Activated T-helper 2 cell treated with anti-CD3 and anti-CD28 coated beads, Interferon-gamma antibody, Interleukin-2, Interleukin-4, amounts not matched to agents 10 μg/mL and 5 μg/mL and 100 μg/mL, durations not matched to agents 14 hours and 24 hours and 36 hours (primary cell): ENCODE measurements at regions of chr15 and their contacts with region 1.

Region 1: GRCh38 chr15:99250494-99251435 is 516 bp upstream of the LRRC28 start:
- DNase-seq: peak; percentile 97
- H3K4me3 Mint-ChIP-seq: peak overlapping the region; percentile 85
- H3K27ac Mint-ChIP-seq: peak overlapping the region; percentile 82
- H3K4me1 Mint-ChIP-seq: peaks cover 26% of the 10 kb centered on the region
- H3K27me3 Mint-ChIP-seq: no peaks in the 10 kb centered on the region

Region 2: GRCh38 chr15:99324082-99324620 is 73.4 kb after region 1 on chr15:
- intact Hi-C with region 1: no loop called
- DNase-seq: no peak
- H3K4me3 Mint-ChIP-seq: no peak overlapping the region
- H3K27ac Mint-ChIP-seq: no peak overlapping the region
- H3K4me1 Mint-ChIP-seq: peaks cover 9% of the 10 kb centered on the region
- H3K27me3 Mint-ChIP-seq: no peaks in the 10 kb centered on the region

Region 3: DNA sequence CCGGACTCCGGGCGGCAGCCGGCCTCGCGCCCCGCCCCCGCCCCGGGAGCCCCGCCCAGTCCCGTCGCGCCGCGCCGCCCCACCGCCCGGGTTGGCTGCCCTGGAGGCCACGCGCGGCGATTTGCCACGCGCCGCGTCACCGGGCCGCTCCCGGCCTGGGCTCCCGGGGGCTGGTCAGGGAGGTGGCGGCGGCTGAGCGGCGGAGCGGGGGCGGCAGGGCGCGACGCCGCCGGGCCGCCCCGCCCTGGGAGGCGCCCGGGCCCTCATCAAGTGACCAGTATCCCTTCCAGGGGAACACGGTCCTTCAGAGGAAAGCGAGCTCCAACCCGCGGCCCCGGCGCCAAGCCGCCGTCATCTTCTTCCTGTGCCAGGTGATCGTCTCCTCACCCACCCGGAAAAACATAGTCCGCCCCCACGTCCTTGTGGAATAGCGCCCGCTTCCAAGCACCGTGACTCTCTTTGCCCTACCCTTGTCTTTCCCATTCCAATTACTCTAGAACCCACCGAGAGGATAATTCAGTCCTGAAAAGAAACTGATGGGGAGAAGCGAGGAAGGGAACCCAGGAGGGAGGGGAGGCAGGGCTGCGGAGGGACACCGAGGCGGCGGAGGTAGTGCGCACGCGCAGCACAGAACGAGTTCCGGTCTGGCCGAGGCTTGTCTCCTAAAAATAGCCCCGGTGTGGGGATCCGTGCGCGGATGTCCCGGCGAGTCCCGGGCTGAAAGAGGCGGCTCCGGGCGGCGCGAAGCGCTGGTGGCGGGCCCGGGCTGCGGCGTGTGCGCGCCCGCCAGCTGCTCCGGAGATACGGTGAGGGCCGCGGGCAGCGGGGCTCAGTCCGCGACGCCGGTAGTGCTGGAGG is 314.8 kb after region 1 on chr15 and contains the start of gene MEF2A:
- intact Hi-C with region 1: loop called (anchors 5 kb)
- DNase-seq: peak; percentile 92
- H3K4me3 Mint-ChIP-seq: peak within 1 kb of the TSS; percentile 98
- H3K27ac Mint-ChIP-seq: peak within 1 kb of the TSS; percentile 93
- H3K4me1 Mint-ChIP-seq: peaks cover 31% of the 10 kb centered on the region
- H3K27me3 Mint-ChIP-seq: peaks cover 8% of the 10 kb centered on the region
- total RNA-seq, gene MEF2A: 20.9 and 23.4 TPM in 2 replicates

Region 4: GRCh38 chr15:99733268-99734039 is 482.7 kb after region 1 on chr15 and contains the start of gene LYSMD4:
- intact Hi-C with region 1: loop called (anchors 1 kb)
- DNase-seq: peak; percentile 96
- H3K4me3 Mint-ChIP-seq: peak within 1 kb of the TSS; percentile 76
- H3K27ac Mint-ChIP-seq: peak within 1 kb of the TSS; percentile 86
- H3K4me1 Mint-ChIP-seq: peaks cover 22% of the 10 kb centered on the region
- H3K27me3 Mint-ChIP-seq: no peaks in the 10 kb centered on the region
- total RNA-seq, gene LYSMD4: 6.8 and 7.6 TPM in 2 replicates

Region 5: DNA sequence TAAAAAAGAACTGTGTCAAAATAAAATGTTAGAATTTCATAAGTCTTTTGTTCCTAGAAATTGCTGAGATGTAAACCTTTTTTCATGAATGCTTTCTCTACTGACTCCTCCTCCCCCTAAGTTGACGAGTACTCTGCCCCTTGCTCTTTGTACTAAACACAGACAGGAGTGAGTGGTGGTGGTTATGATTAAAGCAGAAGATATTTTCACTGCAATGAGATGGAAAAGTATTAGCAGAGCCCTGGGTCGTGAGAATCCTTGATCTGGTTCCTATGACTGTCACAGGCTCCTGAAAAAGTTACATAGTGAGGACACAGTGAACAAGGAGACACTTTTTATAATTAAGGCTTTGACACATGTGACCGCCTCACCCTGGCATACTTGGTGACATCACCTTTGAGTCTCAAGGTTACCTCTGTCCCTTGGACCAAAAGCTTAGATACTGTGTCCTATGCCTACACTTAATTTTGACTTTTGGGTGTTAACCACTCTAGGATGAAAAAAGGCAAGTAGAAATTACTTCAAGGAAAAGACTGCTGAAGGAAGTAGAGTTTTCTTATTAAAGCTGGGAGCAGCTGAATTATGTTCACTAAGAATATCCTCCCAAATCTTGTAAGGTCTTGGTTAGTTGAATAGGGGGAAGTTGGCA is 612.9 kb after region 1 on chr15:
- intact Hi-C with region 1: no loop called
- DNase-seq: no peak
- H3K4me3 Mint-ChIP-seq: no peak overlapping the region
- H3K27ac Mint-ChIP-seq: no peak overlapping the region
- H3K4me1 Mint-ChIP-seq: no peaks in the 10 kb centered on the region
- H3K27me3 Mint-ChIP-seq: no peaks in the 10 kb centered on the region

Region 6: DNA sequence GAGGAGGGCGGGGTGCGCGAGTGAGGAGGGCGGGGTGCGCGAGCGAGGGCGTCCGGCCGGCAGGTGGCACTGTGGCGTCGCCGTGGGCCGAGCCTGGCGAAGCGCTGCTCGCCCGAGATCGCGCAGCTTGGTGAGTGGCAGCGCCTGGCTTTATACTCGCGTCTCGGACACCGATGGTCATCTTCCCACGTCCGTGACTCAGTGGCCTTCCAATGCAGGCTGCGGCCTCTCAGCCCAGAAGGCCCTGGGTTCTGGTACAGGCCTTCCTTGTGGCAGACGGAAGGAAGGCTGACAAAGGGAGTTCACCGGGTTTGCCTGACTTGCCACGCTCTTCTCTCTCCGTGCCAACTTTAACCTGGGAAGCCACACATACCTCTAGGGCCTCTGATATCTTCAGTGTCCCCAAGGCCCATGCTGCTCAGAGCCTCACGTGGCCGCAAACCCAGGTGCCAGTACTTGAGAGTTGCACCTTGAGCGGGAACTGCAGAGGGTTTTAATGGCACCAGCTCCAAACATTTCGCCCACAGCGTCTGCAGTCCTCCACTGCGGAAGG is 677.7 kb after region 1 on chr15:
- intact Hi-C with region 1: loop called (anchors 5 kb)
- DNase-seq: peak; percentile 81
- H3K4me3 Mint-ChIP-seq: peak overlapping the region; percentile 84
- H3K27ac Mint-ChIP-seq: peak overlapping the region; percentile 70
- H3K4me1 Mint-ChIP-seq: peaks cover 14% of the 10 kb centered on the region
- H3K27me3 Mint-ChIP-seq: peaks cover 24% of the 10 kb centered on the region

Region 7: GRCh38 chr15:100602064-100602822 is 1351.5 kb after region 1 on chr15 and contains the starts of genes ASB7 and LINS1:
- intact Hi-C with region 1: loop called (anchors 5 kb)
- DNase-seq: peak; percentile 100
- H3K4me3 Mint-ChIP-seq: no peak within 1 kb of the TSS
- H3K27ac Mint-ChIP-seq: no peak within 1 kb of the TSS
- H3K4me1 Mint-ChIP-seq: peaks cover 50% of the 10 kb centered on the region
- H3K27me3 Mint-ChIP-seq: no peaks in the 10 kb centered on the region
- total RNA-seq, gene ASB7: 18.0 and 19.9 TPM in 2 replicates
- total RNA-seq, gene LINS1: 39.2 and 46.8 TPM in 2 replicates